ENCODE measurements at regions of chr1 and their contacts with region 1.

Region 1: DNA sequence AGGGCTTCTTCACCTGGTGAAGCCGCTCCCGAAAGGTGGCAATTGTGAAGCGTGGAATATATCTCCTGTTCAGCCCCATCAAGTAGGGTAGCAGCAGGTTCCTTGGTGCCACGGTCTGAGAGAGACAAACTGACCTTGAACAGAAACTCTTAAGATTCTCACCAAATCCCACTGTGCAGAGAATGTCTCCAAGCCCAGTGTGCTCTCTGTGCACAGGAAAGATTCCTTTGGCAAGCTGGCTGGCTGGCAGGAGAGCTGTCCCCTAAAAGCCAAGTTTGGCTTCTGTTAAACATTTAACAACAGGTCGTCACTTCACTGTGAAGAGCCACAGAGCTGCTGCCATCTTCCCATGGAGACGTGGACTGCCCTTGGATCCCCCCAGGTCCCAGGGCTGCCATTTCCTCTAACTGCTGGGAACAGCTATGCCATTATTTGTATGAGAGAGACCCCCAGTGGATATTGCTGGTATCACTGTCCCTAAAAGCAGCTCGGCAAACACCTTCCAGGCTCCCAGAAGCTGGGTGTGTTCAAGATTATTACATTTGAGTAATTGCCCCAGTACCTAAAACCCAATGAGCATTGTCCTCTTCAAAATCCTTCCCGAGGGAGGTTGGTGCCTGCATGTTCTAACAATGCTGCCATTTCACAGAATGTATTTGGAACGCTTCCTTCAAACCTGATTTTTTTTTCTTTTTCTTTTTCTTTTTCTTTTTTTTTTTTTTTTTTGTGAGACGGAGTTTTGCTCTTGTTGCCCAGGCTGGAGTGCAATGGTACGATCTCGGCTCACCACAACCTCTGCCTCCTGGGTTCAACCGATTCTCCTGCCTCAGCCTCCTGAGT is 71.8 kb downstream of the CD58 start:
- DNase-seq: peak in 4 of 5 donors; percentile 24 to 59 (median 44)
- H3K4me3 ChIP-seq: no peak overlapping the region
- H3K4me3 Mint-ChIP-seq: no peak overlapping the region
- H3K27ac ChIP-seq: no peak overlapping the region
- H3K27ac Mint-ChIP-seq: peak overlapping the region in 6 of 8 donors; percentile 32 to 94 (median 84)
- H3K4me1 ChIP-seq: peaks cover 28% of the 10 kb centered on the region
- H3K4me1 Mint-ChIP-seq: peaks cover 28 to 36% (median 30%) of the 10 kb centered on the region in 3 donors
- H3K27me3 ChIP-seq: no peaks in the 10 kb centered on the region
- H3K27me3 Mint-ChIP-seq: peaks cover 0 to 4% of the 10 kb centered on the region in 2 donors

Region 2: DNA sequence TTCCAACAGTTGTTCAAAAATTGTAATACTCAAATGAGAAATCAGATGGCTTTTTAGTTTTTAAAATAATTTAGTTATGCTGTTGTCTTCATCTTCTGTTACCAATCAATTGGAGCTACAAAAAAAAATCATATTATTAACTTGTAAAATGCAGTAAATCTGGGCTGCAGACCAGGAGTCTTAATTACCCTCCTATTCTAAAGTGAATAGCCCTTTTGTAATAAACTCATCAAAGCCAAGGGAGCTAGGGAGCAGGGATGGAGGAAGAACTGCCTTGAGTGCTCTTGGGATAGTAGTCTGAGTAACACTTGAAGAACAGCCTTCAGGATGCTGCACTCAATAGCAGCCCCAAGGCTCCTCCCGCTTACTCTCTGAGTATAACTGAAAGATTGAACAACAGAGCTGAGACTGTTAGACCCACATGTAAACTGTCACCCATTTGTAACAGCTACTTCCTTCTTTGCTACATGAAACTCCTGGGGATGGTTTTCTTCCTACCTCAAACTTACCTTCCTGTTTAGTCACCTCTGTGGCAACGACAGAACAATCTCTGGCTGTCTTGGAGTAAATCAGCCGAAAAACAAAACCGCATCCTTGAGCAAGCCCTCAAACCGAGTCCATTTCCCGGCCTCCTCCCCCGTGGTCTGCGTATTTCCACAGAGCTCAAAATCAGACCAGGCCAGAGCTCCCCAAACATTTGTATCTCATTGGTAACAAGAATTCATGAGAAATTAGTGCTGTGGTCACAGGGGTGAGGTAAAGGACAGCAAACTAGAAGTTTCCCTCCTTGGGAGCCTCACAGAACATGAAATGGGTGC is 15.9 kb after region 1 on chr1:
- CTCF ChIA-PET with region 1: interaction called, 15 read pairs
- POLR2A ChIA-PET with region 1: interaction called, 20 read pairs
- DNase-seq: peak; percentile 37 to 77 (median 59)
- H3K4me3 ChIP-seq: peak overlapping the region; percentile 10
- H3K4me3 Mint-ChIP-seq: peak overlapping the region; percentile 37 to 91 (median 75)
- H3K27ac ChIP-seq: peak overlapping the region; percentile 77
- H3K27ac Mint-ChIP-seq: peak overlapping the region; percentile 91 to 100 (median 99)
- H3K4me1 ChIP-seq: peaks cover 35% of the 10 kb centered on the region
- H3K4me1 Mint-ChIP-seq: peaks cover 57 to 75% (median 74%) of the 10 kb centered on the region in 3 donors
- H3K27me3 ChIP-seq: no peaks in the 10 kb centered on the region
- H3K27me3 Mint-ChIP-seq: no peaks in the 10 kb centered on the region

Measured in CD8-positive, alpha-beta memory T cell (primary cell).